Sciatic nerve (tissue), 2 donors: ENCODE measurements at regions of chr11 and their contacts with region 1.

Region 1: DNA sequence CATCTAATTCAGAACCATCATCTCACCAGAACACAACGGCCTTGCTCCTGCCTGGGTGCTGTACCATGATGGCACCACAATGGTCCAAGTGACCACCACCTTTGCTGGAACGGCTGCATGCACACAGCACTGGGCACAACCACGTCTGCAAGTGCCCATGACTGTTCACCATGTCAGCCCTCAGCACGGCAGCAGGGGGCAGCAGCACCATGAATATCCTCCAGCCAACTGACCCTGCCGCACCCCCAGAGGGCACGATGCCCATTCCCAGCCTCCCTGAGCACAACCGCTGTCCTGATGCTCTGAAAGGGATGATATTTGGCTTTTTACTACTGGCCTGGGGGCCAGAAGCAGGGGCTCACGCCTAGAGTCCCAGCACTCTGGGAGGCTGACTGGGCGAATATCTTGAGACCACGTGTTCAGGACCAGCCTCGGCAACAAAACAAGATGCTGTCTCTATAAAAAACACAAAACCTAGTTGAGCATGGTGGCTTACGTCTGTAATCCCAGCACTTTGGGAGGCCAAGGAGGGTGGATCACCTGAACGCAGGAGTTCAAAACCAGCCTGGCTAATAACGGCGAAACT is 25.7 kb downstream of the DRD4 start:
- DNase-seq: peak; percentile 79
- ATAC-seq: peak; percentile 76

Region 2: DNA sequence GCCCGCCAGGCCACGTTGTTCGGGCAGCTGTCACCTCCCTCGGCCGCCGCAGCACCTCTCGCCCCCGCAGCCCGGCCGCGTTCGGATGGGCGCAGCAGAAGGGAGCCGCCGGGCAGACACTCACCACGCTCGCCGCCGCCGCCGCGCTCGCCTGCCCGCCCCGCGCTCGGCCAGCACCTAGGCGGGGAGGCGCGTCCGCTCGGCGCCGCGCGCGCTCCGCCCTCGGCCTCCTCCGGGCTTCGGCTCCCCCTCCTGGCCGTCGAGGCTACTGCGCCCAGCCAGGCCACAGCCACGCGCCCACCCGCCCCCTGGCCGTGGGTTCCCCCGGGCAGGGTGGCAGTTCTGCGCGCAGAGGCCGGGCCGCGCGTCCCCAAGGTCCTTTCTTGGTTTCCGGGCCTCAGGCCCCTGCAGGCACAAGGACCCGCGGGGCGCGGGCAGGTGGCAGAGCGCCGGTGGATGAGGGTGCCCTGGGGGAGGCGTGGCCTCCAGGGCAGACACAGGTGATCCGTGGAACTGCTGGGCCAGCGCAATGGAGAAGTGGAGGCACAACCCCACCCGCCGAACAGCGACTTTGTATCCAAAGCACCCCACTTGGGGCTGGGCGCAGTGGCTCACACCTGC is 135.4 kb after region 1 on chr11 and contains the start of gene SLC25A22:
- intact Hi-C with region 1: loop called (anchors 10 kb)
- DNase-seq: peak; percentile 86
- ATAC-seq: peak; percentile 37
- total RNA-seq, gene SLC25A22: 7.2 TPM

Region 3: GRCh38 chr11:910589-911195 is 247.9 kb after region 1 on chr11 and contains the start of gene CHID1:
- intact Hi-C with region 1: no loop called
- DNase-seq: peak; percentile 90
- ATAC-seq: peak; percentile 89
- total RNA-seq, gene CHID1: 59.4 TPM